Naive thymus-derived CD4-positive, alpha-beta T cell (primary cell): ENCODE measurements at regions of chr4 and their contacts with region 1.

Region 1: DNA sequence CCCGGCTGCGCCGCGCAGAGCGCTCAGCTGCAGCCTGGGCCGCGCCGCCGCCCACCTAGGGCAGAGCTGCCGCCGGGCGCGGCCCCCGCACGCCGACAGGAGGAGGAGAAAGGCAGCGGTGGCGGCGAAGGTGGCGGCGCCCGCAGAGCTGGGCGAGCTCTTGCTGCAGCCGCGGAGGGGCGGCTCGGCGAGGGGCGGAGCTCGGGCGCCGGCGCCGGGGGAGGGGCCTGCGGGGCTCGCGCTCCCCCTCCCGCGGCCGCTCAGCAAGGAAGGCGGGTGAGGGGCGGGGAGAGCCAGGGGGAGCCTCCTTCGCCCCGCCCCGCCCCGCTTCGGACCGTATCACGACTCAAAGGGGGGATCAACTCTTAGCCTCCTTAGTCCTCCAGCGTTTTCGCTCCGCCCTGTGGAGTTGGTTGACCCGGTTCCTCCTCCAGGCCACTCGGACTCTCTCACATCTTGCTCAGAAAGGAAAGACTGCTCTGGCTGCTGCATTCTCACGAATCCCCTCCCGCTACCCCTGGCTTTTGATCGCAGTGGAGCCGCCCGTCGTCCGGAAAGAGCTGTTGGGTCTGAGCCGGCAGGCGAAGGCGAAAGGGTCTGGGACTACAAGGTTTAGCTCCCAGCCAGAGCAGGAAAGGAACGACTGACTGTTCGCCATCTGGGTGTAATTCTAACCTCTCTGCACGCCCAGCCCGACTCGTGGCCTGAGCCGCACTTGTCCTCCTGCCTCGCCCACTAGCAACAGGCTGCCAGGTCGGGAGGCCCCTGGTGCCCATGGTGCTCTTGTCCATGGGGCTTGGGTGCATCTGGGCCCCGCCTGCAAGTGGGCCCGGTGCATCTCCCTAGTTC is at the start of gene ATP8A1:
- DNase-seq: peak; percentile 85 to 96 (median 93)
- ATAC-seq: peak; percentile 97
- H3K4me3 ChIP-seq: peak within 1 kb of the TSS; percentile 96
- H3K4me3 Mint-ChIP-seq: peak within 1 kb of the TSS; percentile 92 to 98 (median 98)
- H3K27ac ChIP-seq: peak within 1 kb of the TSS; percentile 83
- H3K27ac Mint-ChIP-seq: peak within 1 kb of the TSS; percentile 95 to 99 (median 98)
- H3K4me1 ChIP-seq: peaks cover 18 to 21% of the 10 kb centered on the region in 2 donors
- H3K4me1 Mint-ChIP-seq: peaks cover 38 to 64% (median 51%) of the 10 kb centered on the region in 7 donors
- H3K27me3 ChIP-seq: no peaks in the 10 kb centered on the region
- H3K27me3 Mint-ChIP-seq: peaks cover 0 to 6% (median 0%) of the 10 kb centered on the region in 5 donors
- total RNA-seq, gene ATP8A1: 28.9 to 66.8 (median 54.4) TPM

Region 2: DNA sequence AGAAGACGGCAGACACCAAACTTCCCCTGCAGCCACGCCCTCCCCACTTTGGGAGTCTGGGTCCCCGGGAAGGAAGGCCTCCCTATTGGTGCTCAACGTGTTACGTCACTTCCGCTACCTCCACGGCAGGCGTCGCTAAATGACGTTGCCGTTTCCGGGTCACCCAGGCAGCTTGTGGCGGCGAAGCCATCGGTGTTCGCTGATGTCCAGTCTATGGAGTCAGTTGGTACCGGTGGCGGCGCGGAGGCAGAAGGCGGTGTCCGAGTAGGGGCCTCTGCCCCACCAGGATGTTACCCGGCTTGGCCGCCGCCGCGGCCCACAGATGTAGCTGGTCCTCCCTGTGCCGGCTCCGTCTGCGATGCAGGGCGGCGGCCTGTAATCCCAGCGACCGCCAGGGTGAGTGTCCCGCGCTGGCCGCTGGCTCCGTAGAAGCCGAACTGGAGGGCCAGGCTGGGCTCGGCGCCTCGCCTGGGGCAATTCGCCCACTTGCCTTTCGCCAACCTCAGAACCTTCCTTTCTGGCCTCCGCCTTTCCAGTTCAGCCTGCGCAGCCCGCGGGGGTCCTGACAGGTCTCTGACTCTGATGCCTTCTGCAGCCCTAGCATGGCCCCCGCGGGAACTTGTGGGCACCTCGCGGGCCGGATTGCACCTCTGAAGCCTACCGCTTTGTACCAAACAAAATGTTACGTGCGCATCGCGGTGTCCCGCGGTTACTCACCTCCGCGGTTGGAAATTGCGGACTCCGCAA is 666.6 kb before region 1 on chr4 and contains the start of gene SLC30A9:
- CTCF ChIA-PET with region 1: no interaction called
- POLR2A ChIA-PET with region 1: no interaction called
- intact Hi-C with region 1: loop called (anchors 1 to 5 kb)
- DNase-seq: peak; percentile 83 to 96 (median 93)
- ATAC-seq: peak; percentile 98
- H3K4me3 ChIP-seq: peak within 1 kb of the TSS; percentile 86
- H3K4me3 Mint-ChIP-seq: peak within 1 kb of the TSS; percentile 92 to 99 (median 96)
- H3K27ac ChIP-seq: peak within 1 kb of the TSS; percentile 84
- H3K27ac Mint-ChIP-seq: peak within 1 kb of the TSS; percentile 90 to 99 (median 97)
- H3K4me1 ChIP-seq: peaks cover 12 to 16% of the 10 kb centered on the region in 2 donors
- H3K4me1 Mint-ChIP-seq: peaks cover 17 to 48% (median 43%) of the 10 kb centered on the region in 7 donors
- H3K27me3 ChIP-seq: no peaks in the 10 kb centered on the region
- H3K27me3 Mint-ChIP-seq: no peaks in the 10 kb centered on the region
- total RNA-seq, gene SLC30A9: 21.4 to 34.4 (median 32.7) TPM

Region 3: GRCh38 chr4:42492962-42493361 is 164.2 kb before region 1 on chr4:
- CTCF ChIA-PET with region 1: no interaction called
- POLR2A ChIA-PET with region 1: no interaction called
- intact Hi-C with region 1: no loop called
- DNase-seq: no peak
- ATAC-seq: no peak
- H3K4me3 ChIP-seq: no peak overlapping the region
- H3K4me3 Mint-ChIP-seq: no peak overlapping the region
- H3K27ac ChIP-seq: no peak overlapping the region
- H3K27ac Mint-ChIP-seq: no peak overlapping the region
- H3K4me1 ChIP-seq: no peaks in the 10 kb centered on the region
- H3K4me1 Mint-ChIP-seq: peaks cover 0 to 12% (median 6%) of the 10 kb centered on the region in 7 donors
- H3K27me3 ChIP-seq: no peaks in the 10 kb centered on the region
- H3K27me3 Mint-ChIP-seq: no peaks in the 10 kb centered on the region

Region 4: GRCh38 chr4:42617030-42617429 is 40.1 kb before region 1 on chr4:
- CTCF ChIA-PET with region 1: no interaction called
- POLR2A ChIA-PET with region 1: interaction called, 4 read pairs
- intact Hi-C with region 1: loop called in 1 of 2 experiments (anchors 5 kb)
- DNase-seq: no peak
- ATAC-seq: no peak
- H3K4me3 ChIP-seq: no peak overlapping the region
- H3K4me3 Mint-ChIP-seq: no peak overlapping the region
- H3K27ac ChIP-seq: no peak overlapping the region
- H3K27ac Mint-ChIP-seq: no peak overlapping the region
- H3K4me1 ChIP-seq: no peaks in the 10 kb centered on the region
- H3K4me1 Mint-ChIP-seq: peaks cover 0 to 14% (median 2%) of the 10 kb centered on the region in 7 donors
- H3K27me3 ChIP-seq: no peaks in the 10 kb centered on the region
- H3K27me3 Mint-ChIP-seq: no peaks in the 10 kb centered on the region

Region 5: GRCh38 chr4:42633605-42634388 is 23.4 kb before region 1 on chr4:
- CTCF ChIA-PET with region 1: interaction called, 4 read pairs
- POLR2A ChIA-PET with region 1: interaction called, 19 read pairs
- intact Hi-C with region 1: loop called (anchors 1 kb)
- DNase-seq: no peak
- ATAC-seq: no peak
- H3K4me3 ChIP-seq: no peak overlapping the region
- H3K4me3 Mint-ChIP-seq: peak overlapping the region in 1 of 10 donors; percentile 5
- H3K27ac ChIP-seq: no peak overlapping the region
- H3K27ac Mint-ChIP-seq: peak overlapping the region in 3 of 9 donors; percentile 6 to 48 (median 9)
- H3K4me1 ChIP-seq: peaks cover 14 to 32% of the 10 kb centered on the region in 2 donors
- H3K4me1 Mint-ChIP-seq: peaks cover 40 to 97% (median 89%) of the 10 kb centered on the region in 7 donors
- H3K27me3 ChIP-seq: no peaks in the 10 kb centered on the region
- H3K27me3 Mint-ChIP-seq: no peaks in the 10 kb centered on the region

Region 6: GRCh38 chr4:42673082-42673425 is 15.9 kb after region 1 on chr4:
- CTCF ChIA-PET with region 1: interaction called, 4 read pairs
- POLR2A ChIA-PET with region 1: interaction called, 58 read pairs
- intact Hi-C with region 1: loop called (anchors 1 kb)
- DNase-seq: peak in 2 of 9 donors; percentile 8 to 17
- ATAC-seq: no peak
- H3K4me3 ChIP-seq: no peak overlapping the region
- H3K4me3 Mint-ChIP-seq: peak overlapping the region in 9 of 10 donors; percentile 5 to 76 (median 58)
- H3K27ac ChIP-seq: no peak overlapping the region
- H3K27ac Mint-ChIP-seq: peak overlapping the region; percentile 56 to 97 (median 78)
- H3K4me1 ChIP-seq: peaks cover 23 to 28% of the 10 kb centered on the region in 2 donors
- H3K4me1 Mint-ChIP-seq: peaks cover 25 to 60% (median 41%) of the 10 kb centered on the region in 7 donors
- H3K27me3 ChIP-seq: no peaks in the 10 kb centered on the region
- H3K27me3 Mint-ChIP-seq: no peaks in the 10 kb centered on the region

Region 7: DNA sequence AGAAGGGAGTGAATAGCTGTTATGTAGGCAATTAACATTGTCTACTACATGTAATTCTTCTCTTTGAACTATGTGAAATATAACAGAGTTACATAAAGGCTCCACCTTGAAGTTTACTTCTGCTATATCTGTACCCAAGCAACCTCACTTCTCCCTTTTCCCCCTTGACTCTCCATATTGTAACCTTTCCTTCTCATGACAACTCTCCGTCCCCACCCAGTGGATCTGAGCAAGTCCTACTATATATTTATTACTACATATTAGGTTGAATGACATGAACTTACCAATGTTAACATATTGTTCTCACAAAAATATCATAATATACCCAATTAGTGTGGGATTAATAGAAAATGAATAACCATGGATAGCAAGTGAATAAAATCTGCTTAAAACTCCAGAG is 92.9 kb after region 1 on chr4:
- CTCF ChIA-PET with region 1: no interaction called
- POLR2A ChIA-PET with region 1: no interaction called
- intact Hi-C with region 1: loop called in 1 of 2 experiments (anchors 1 kb)
- DNase-seq: peak in 7 of 9 donors; percentile 15 to 59 (median 39)
- ATAC-seq: peak; percentile 88
- H3K4me3 ChIP-seq: no peak overlapping the region
- H3K4me3 Mint-ChIP-seq: no peak overlapping the region
- H3K27ac ChIP-seq: no peak overlapping the region
- H3K27ac Mint-ChIP-seq: no peak overlapping the region
- H3K4me1 ChIP-seq: no peaks in the 10 kb centered on the region
- H3K4me1 Mint-ChIP-seq: peaks cover 0 to 4% (median 0%) of the 10 kb centered on the region in 7 donors
- H3K27me3 ChIP-seq: no peaks in the 10 kb centered on the region
- H3K27me3 Mint-ChIP-seq: no peaks in the 10 kb centered on the region

Region 8: GRCh38 chr4:42761804-42762203 is 104.6 kb after region 1 on chr4:
- CTCF ChIA-PET with region 1: no interaction called
- POLR2A ChIA-PET with region 1: no interaction called
- intact Hi-C with region 1: no loop called
- DNase-seq: no peak
- ATAC-seq: no peak
- H3K4me3 ChIP-seq: no peak overlapping the region
- H3K4me3 Mint-ChIP-seq: no peak overlapping the region
- H3K27ac ChIP-seq: no peak overlapping the region
- H3K27ac Mint-ChIP-seq: no peak overlapping the region
- H3K4me1 ChIP-seq: no peaks in the 10 kb centered on the region
- H3K4me1 Mint-ChIP-seq: no peaks in the 10 kb centered on the region
- H3K27me3 ChIP-seq: no peaks in the 10 kb centered on the region
- H3K27me3 Mint-ChIP-seq: peaks cover 0 to 23% (median 13%) of the 10 kb centered on the region in 5 donors